ENCODE measurements at regions of chr7 and their contacts with region 1.

Region 1: GRCh38 chr7:30348083-30348560 is 63.7 kb downstream of the ZNRF2 start:
- DNase-seq: peak; percentile 64
- ATAC-seq: peak; percentile 89
- H3K4me3 ChIP-seq: peak overlapping the region in 1 of 2 experiments; percentile 10; a peak in 1 of 4 replicates
- H3K27ac ChIP-seq: peak overlapping the region; percentile 36
- H3K4me1 ChIP-seq: peaks cover 43% of the 10 kb centered on the region
- H3K27me3 ChIP-seq: no peaks in the 10 kb centered on the region
- CTCF ChIP-seq: no peak

Region 2: DNA sequence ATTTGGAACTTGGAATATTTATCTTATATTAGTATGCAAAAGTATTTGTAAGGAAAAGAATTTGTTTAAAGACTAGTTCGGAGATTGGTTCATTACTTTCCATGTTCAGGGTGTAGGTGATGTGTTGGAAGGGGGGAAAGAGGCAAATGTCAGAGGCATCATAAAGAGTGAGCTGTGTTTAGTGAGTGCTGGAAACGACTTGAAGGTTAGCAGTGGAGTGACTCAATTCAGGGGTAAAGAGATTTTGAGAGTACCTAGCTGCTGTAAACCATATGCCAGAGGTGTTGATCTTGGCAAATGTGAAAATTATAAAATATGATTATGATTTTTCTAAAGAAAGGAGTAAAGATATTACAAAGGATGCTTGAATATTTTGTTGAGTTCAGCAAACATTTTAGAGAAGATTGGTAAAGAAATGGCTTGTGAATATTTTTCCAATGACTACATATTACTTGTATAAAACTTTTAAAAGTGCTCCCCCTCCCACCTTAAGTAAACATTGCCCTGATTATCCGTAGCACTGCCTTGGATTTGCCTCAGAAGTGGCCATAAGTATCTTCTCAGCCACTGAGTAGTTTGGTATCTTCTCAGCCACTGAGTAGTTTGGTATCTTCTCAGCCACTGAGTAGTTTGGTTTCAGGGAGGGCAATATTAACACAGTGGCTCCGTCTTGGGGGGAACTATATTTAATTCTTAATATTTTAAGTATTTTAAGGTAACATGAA is 12.2 kb before region 1 on chr7:
- CTCF ChIA-PET with region 1: no interaction called
- POLR2A ChIA-PET with region 1: interaction called, 14 read pairs
- in situ Hi-C with region 1: no loop called
- intact Hi-C with region 1: no loop called
- DNase-seq: no peak
- ATAC-seq: no peak; the same call in 1 of the 2 replicates
- H3K4me3 ChIP-seq: no peak overlapping the region
- H3K27ac ChIP-seq: no peak overlapping the region
- H3K4me1 ChIP-seq: peaks cover 7% of the 10 kb centered on the region
- H3K27me3 ChIP-seq: no peaks in the 10 kb centered on the region
- CTCF ChIP-seq: no peak